ENCODE measurements at regions of chr2 and their contacts with region 1.

Region 1: DNA sequence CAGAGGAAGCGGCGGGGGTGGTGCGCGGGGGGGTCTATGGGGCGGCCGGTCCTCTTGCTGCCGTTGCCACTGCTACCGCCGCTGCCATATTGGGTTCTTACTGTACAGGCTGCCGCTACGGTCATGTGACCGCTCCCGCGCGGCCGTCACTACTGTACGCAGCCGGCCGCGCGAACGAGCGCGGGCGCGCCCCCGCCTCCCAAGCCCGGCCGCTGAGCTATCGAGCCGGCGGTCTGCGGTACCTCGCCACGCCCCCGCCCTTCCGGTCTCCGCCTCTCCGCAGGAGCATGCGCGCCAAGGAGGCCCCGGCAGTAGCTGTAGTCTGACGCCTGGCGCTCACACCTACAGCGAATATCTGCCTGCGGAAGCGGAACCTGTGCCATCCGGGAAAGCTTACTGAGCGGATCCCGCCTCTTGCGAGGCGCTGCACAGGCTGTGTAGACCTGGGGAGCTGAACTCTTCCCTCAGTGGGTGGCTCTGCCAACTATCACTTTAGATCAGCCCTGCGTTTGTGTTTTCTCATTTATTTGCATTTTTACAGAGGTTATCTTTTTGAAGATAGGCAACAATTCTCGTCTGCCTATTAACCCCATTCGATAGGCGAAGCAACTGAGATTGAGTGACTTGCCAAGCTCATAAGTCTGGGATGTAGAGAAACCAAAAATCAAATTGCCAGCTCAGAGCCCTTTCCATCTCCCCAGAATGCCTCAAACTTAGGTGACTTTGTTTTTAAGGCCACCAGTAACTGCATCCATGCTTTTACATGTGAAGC is at the start of gene ASXL2:
- DNase-seq: peak; percentile 98
- ATAC-seq: peak; percentile 88
- H3K4me3 Mint-ChIP-seq: peak within 1 kb of the TSS; percentile 98
- H3K27ac Mint-ChIP-seq: peak within 1 kb of the TSS; percentile 100
- H3K4me1 Mint-ChIP-seq: peaks cover 24% of the 10 kb centered on the region
- H3K27me3 Mint-ChIP-seq: peaks cover 2% of the 10 kb centered on the region
- CTCF ChIP-seq: no peak
- total RNA-seq, gene ASXL2: 38.4 and 41.9 TPM in 2 replicates

Region 2: DNA sequence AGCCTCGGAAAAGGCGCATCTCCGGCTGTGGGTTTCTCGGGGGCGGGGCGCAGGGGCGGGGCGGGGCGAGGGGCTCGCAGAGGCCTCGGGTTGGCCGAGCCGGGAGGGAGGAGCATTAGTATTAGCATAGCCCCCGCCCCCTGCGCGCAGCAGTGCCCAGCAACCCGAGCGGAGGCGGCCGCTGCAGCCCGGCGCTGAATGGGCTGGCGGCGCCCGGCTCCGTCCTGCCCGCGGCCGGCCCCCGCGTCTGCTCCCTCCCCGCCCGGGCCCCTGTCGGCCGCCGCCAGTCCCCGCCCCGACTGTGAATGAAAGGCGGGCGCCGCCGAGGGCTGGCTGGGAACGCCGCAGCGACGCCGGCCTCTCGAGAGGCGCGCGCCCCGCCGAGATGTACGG is 836.6 kb before region 1 on chr2 and contains the start of gene EFR3B:
- CTCF ChIA-PET with region 1: no interaction called
- POLR2A ChIA-PET with region 1: no interaction called
- intact Hi-C with region 1: loop called (anchors 10 kb)
- DNase-seq: peak; percentile 84
- ATAC-seq: peak; percentile 99
- H3K4me3 Mint-ChIP-seq: peak within 1 kb of the TSS; percentile 84
- H3K27ac Mint-ChIP-seq: no peak within 1 kb of the TSS
- H3K4me1 Mint-ChIP-seq: peaks cover 27% of the 10 kb centered on the region
- H3K27me3 Mint-ChIP-seq: peaks cover 42% of the 10 kb centered on the region
- CTCF ChIP-seq: no peak
- total RNA-seq, gene EFR3B: 0.07 and 0.10 TPM in 2 replicates

Region 3: GRCh38 chr2:25673300-25674076 is 205.1 kb before region 1 on chr2 and contains the start of gene DTNB:
- CTCF ChIA-PET with region 1: no interaction called
- POLR2A ChIA-PET with region 1: interaction called, 9 read pairs
- intact Hi-C with region 1: loop called (anchors 1 kb)
- DNase-seq: peak; percentile 83
- ATAC-seq: peak; percentile 79
- H3K4me3 Mint-ChIP-seq: peak within 1 kb of the TSS; percentile 88
- H3K27ac Mint-ChIP-seq: peak within 1 kb of the TSS; percentile 72
- H3K4me1 Mint-ChIP-seq: peaks cover 15% of the 10 kb centered on the region
- H3K27me3 Mint-ChIP-seq: no peaks in the 10 kb centered on the region
- CTCF ChIP-seq: no peak
- total RNA-seq, gene DTNB: 18.3 and 28.9 TPM in 2 replicates

Region 4: DNA sequence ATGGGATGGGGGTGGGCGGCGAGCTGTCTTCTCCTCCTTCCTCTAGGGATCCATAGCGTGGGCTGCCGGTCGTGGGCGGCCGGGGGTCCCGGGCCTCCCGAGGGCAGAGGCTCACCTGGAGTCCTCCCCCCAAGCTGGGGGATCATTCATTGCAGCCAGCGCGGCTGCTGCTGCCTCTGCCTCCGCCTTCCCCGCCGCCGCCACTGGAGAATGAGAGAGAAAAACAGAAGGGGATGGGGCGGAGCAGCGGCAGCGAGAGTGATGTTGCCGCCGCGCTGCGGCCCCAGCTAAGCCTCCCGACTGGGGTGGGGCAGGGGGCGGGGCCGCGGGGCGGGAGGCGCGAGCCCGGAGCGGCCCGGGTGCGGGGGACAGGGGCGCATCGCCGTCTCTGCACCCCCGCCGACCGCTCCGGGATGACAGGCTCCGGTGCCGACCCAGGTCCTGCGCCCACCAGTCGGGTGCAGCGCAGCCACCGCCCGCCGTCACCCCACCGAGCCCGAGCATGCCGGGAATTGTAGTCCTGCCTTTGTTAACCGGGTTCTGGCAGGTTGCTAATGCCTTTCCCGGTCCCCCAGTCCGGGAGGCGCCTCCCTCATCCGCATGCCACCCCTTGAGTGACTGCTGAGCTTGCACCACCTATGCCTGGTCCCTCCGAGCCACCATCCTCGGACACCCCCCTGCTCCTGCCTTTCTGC is 103.9 kb after region 1 on chr2 and contains the start of gene KIF3C:
- CTCF ChIA-PET with region 1: no interaction called
- POLR2A ChIA-PET with region 1: no interaction called
- intact Hi-C with region 1: loop called (anchors 1 kb)
- DNase-seq: peak; percentile 60
- ATAC-seq: peak; percentile 86
- H3K4me3 Mint-ChIP-seq: peak within 1 kb of the TSS; percentile 86
- H3K27ac Mint-ChIP-seq: peak within 1 kb of the TSS; percentile 18
- H3K4me1 Mint-ChIP-seq: no peaks in the 10 kb centered on the region
- H3K27me3 Mint-ChIP-seq: no peaks in the 10 kb centered on the region
- CTCF ChIP-seq: no peak
- total RNA-seq, gene KIF3C: 1.5 and 1.8 TPM in 2 replicates

Region 5: GRCh38 chr2:26184555-26185303 is 306.2 kb after region 1 on chr2:
- CTCF ChIA-PET with region 1: no interaction called
- POLR2A ChIA-PET with region 1: interaction called, 10 read pairs
- intact Hi-C with region 1: no loop called
- DNase-seq: peak; percentile 80
- ATAC-seq: peak; percentile 98
- H3K4me3 Mint-ChIP-seq: peak overlapping the region; percentile 75
- H3K27ac Mint-ChIP-seq: no peak overlapping the region
- H3K4me1 Mint-ChIP-seq: peaks cover 10% of the 10 kb centered on the region
- H3K27me3 Mint-ChIP-seq: peaks cover 13% of the 10 kb centered on the region
- CTCF ChIP-seq: no peak

Region 6: GRCh38 chr2:26652361-26653041 is 774.0 kb after region 1 on chr2:
- CTCF ChIA-PET with region 1: no interaction called
- POLR2A ChIA-PET with region 1: no interaction called
- intact Hi-C with region 1: no loop called
- DNase-seq: no peak
- ATAC-seq: no peak
- H3K4me3 Mint-ChIP-seq: no peak overlapping the region
- H3K27ac Mint-ChIP-seq: no peak overlapping the region
- H3K4me1 Mint-ChIP-seq: no peaks in the 10 kb centered on the region
- H3K27me3 Mint-ChIP-seq: peaks cover 13% of the 10 kb centered on the region
- CTCF ChIP-seq: no peak

Region 7: GRCh38 chr2:26785431-26786206 is 907.1 kb after region 1 on chr2 and contains the start of gene CENPA:
- CTCF ChIA-PET with region 1: no interaction called
- POLR2A ChIA-PET with region 1: no interaction called
- intact Hi-C with region 1: loop called (anchors 5 kb)
- DNase-seq: peak; percentile 87
- ATAC-seq: peak; percentile 99
- H3K4me3 Mint-ChIP-seq: peak within 1 kb of the TSS; percentile 84
- H3K27ac Mint-ChIP-seq: peak within 1 kb of the TSS; percentile 65
- H3K4me1 Mint-ChIP-seq: peaks cover 15% of the 10 kb centered on the region
- H3K27me3 Mint-ChIP-seq: peaks cover 3% of the 10 kb centered on the region
- CTCF ChIP-seq: no peak
- total RNA-seq, gene CENPA: 0.42 TPM in 2 replicates